ENCODE measurements at regions of chr19 and their contacts with region 1.

Region 1: DNA sequence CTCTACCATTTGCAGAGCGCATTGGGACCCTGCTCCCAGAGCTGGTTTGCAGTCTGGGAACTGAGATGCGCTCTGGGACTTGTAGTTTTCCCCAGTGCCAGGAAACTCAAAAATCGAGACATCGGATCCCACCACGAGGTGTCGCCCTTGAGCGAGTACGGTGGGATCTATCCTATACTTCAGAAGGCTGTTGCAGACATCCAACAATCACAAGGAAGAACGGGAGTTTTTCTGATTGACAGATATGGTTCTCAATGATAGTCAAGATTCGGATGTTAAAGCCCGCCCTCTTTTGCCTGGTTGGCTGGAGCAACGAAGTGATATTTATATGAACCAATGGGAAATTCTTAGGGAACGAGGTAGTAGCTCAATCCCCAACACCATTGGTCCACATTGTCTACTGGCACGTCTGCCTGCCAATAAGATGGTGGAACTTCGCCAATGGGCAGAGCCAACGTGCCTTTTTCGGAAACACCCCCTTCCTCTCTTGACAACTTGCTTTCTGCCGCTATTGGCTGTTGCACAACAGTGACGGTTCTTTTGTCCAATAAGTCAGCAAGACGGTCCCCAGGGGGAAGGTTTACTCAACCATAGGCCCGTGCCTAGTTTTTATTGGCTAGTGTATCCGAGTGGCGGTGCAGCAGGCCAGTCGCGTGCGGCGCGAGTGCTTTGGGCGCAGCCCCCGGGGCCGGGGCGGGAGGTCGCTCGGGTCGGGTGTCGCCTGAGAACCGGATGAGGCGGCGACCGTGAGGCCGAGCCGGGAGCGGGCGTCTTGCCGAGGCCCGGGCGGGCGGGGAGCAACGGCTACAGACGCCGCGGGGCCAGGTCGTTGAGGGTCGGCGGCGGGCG is at the start of gene DNM2:
- DNase-seq: peak; percentile 98
- ATAC-seq: peak; percentile 92
- H3K4me3 Mint-ChIP-seq: peak within 1 kb of the TSS; percentile 97
- H3K27ac Mint-ChIP-seq: peak within 1 kb of the TSS; percentile 89
- H3K4me1 Mint-ChIP-seq: peaks cover 45% of the 10 kb centered on the region
- H3K27me3 Mint-ChIP-seq: no peaks in the 10 kb centered on the region
- total RNA-seq, gene DNM2: 167 to 185 TPM

Region 2: DNA sequence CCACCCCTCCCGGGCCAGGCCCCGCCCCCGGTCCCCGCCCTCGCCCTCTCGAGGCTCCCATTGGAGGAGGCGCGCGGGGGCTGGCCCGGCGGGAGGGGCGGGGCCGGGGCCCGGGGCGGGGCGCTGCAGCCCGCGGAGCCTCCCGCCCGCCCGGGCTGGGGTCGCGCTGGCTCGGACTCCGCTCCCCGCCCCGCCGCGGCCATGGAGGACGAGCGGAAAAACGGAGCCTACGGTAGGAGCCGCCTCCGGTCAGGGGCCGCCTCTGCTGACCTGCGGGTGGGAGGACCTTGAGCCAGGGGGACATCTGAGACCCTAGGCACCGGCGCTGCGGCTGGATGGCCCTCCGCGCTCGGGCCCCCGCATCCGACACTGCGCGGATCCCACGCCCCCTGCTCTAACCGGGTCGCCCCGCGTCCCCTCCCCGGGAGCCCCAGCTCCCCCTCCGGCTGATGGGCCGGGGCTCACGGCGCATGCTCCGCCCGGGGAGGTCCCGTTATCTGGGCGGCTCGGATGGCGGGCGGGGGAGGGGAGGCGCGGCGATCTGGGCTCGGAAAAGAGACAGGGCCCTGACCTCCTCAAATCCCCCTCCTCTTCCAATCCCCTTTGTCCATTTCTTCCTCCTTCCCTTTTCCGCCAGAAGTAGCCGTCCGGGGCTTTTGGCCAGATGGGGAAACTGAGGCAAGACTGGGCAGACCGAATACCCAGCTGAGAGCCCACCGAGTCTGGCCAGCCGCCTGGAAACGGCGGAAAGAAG is 115.1 kb before region 1 on chr19:
- CTCF ChIA-PET with region 1: interaction called, 3 read pairs
- POLR2A ChIA-PET with region 1: interaction called, 3 read pairs
- intact Hi-C with region 1: loop called in 1 of 2 experiments (anchors 1 kb)
- DNase-seq: peak; percentile 95
- ATAC-seq: peak; percentile 84
- H3K4me3 Mint-ChIP-seq: peak overlapping the region; percentile 95
- H3K27ac Mint-ChIP-seq: peak overlapping the region; percentile 99
- H3K4me1 Mint-ChIP-seq: peaks cover 24% of the 10 kb centered on the region
- H3K27me3 Mint-ChIP-seq: no peaks in the 10 kb centered on the region

Region 3: DNA sequence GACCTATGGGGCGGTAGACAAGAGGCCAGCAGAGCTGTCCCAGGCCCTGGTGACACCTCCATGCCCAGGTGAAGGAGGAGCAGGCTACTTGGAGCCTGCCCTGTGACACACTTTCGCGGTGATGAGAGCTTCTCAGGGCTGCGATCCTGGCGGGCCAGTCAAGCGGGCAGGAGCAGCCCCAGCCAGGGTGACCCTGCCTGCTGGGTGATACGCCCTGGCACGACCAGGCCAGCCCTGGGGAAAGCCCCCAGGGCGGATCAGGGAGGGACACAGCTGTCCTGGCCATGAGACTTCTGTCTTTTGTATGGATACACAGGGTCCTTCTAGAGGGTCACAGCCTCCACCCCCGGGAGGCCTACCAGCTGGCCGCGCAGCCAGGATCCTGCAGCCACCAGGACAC is 13.3 kb after region 1 on chr19:
- CTCF ChIA-PET with region 1: interaction called, 6 read pairs
- POLR2A ChIA-PET with region 1: interaction called, 4 read pairs
- intact Hi-C with region 1: loop called in 1 of 2 experiments (anchors 1 kb)
- DNase-seq: no peak
- ATAC-seq: no peak
- H3K4me3 Mint-ChIP-seq: no peak overlapping the region
- H3K27ac Mint-ChIP-seq: peak overlapping the region; percentile 87
- H3K4me1 Mint-ChIP-seq: peaks cover 53% of the 10 kb centered on the region
- H3K27me3 Mint-ChIP-seq: no peaks in the 10 kb centered on the region

Region 4: GRCh38 chr19:10797541-10798256 is 80.1 kb after region 1 on chr19:
- CTCF ChIA-PET with region 1: interaction called, 3 read pairs
- POLR2A ChIA-PET with region 1: no interaction called
- intact Hi-C with region 1: loop called (anchors 1 to 2 kb)
- DNase-seq: peak; percentile 95
- ATAC-seq: peak; percentile 94
- H3K4me3 Mint-ChIP-seq: peak overlapping the region; percentile 68
- H3K27ac Mint-ChIP-seq: peak overlapping the region; percentile 97
- H3K4me1 Mint-ChIP-seq: peaks cover 36% of the 10 kb centered on the region
- H3K27me3 Mint-ChIP-seq: no peaks in the 10 kb centered on the region

Region 5: DNA sequence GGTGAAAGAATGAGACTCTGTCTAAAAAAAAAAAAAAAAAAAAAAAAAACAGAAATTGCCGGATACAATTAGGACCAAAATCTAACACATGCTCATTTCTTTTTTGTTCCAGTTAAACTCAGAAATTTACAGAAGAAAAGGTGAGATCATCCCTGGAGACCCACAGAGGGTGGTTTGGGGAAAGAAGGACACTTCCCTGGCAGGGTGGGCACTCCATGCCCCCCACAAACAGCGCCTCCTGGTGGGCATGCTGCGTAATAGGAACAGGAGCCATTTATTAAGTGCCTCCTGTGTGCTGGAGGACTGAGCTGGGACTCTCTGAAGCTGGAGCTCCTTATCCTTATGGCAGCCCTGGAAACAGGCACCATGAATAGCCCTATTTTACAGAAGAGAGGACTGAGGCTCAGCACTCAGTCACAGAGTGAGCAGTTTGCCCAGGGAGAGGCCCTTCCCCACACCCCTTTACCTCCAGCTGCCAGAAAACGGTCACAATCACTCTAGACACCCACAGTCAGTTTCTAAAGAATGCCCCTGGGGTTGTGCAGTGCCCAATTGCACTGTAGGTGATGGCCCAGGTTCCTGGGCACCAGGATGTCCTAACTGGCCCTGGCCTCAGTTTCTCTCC is 140.7 kb after region 1 on chr19:
- CTCF ChIA-PET with region 1: interaction called, 44 read pairs
- POLR2A ChIA-PET with region 1: no interaction called
- intact Hi-C with region 1: loop called in 1 of 2 experiments (anchors 1 kb)
- DNase-seq: peak; percentile 64
- ATAC-seq: peak; percentile 69
- H3K4me3 Mint-ChIP-seq: no peak overlapping the region
- H3K27ac Mint-ChIP-seq: no peak overlapping the region
- H3K4me1 Mint-ChIP-seq: no peaks in the 10 kb centered on the region
- H3K27me3 Mint-ChIP-seq: no peaks in the 10 kb centered on the region

Region 6: GRCh38 chr19:10928525-10929401 is 211.2 kb after region 1 on chr19 and contains the starts of genes TIMM29 and YIPF2:
- CTCF ChIA-PET with region 1: no interaction called
- POLR2A ChIA-PET with region 1: no interaction called
- intact Hi-C with region 1: loop called in 1 of 2 experiments (anchors 2 kb)
- DNase-seq: peak; percentile 97
- ATAC-seq: peak; percentile 96
- H3K4me3 Mint-ChIP-seq: peak within 1 kb of the TSS; percentile 90
- H3K27ac Mint-ChIP-seq: peak within 1 kb of the TSS; percentile 79
- H3K4me1 Mint-ChIP-seq: peaks cover 21% of the 10 kb centered on the region
- H3K27me3 Mint-ChIP-seq: no peaks in the 10 kb centered on the region
- total RNA-seq, gene TIMM29: 8.6 to 15.5 TPM
- total RNA-seq, gene YIPF2: 15.8 to 21.3 TPM

Measured in activated CD4-positive, alpha-beta T cell treated with anti-CD3 and anti-CD28 coated beads for 36 hours (primary cell).